Activated CD4-positive, alpha-beta T cell treated with anti-CD3 and anti-CD28 coated beads, Interleukin-2, amount 10 ng/mL, durations not matched to agents 7 days and 5 days (primary cell): ENCODE measurements at regions of chr17 and their contacts with region 1.

Region 1: DNA sequence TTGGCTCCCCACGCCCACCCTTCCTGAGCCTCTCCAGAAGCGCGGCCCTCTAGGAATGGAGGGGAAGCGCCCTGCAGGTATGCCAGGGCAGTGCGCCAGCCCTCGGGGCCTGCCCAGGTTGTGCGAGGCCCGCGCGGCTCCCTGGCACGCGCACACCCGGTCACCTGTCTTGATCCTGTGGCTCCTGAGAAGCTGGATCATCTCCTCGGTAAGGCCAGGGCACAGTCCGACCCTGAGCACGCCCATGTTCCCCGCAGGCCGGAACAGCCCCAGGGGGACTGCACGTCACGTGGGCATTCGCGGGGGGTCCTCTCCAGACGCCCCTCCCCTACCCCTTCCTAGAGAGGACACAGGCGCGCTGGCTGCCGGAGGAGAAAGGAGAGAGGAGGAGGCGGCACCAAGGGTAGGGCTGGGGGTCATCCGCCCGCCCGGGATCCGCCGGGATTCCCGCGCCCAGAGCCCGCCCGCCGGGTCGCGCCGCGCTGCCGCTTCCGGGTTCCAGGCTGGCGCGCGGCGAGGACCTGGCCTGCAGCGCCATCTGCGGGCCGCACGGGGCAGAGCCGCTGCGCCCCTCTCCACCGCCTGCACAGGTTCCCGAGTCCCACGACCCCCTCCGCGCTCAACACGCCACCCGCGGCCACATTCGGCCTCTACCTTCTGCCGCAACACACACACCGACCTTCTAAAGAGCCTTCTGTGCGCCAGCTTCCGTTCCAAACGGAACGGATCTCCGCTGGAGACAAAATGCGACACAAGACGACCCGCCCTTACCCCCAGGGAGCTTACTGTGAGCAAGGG is at the start of gene RAD51D:
- DNase-seq: peak; percentile 81
- H3K4me3 Mint-ChIP-seq: peak within 1 kb of the TSS; percentile 90
- H3K27ac Mint-ChIP-seq: peak within 1 kb of the TSS; percentile 97
- H3K4me1 Mint-ChIP-seq: peaks cover 37% of the 10 kb centered on the region
- H3K27me3 Mint-ChIP-seq: no peaks in the 10 kb centered on the region
- total RNA-seq, gene RAD51D: 26.7 to 41.6 TPM

Region 2: GRCh38 chr17:34980681-34981537 is 138.7 kb before region 1 on chr17:
- CTCF ChIA-PET with region 1: interaction called, 12 read pairs
- POLR2A ChIA-PET with region 1: no interaction called
- DNase-seq: peak; percentile 81
- H3K4me3 Mint-ChIP-seq: peak overlapping the region; percentile 87
- H3K27ac Mint-ChIP-seq: peak overlapping the region; percentile 97
- H3K4me1 Mint-ChIP-seq: peaks cover 39% of the 10 kb centered on the region
- H3K27me3 Mint-ChIP-seq: no peaks in the 10 kb centered on the region

Region 3: GRCh38 chr17:34998205-34998604 is 121.4 kb before region 1 on chr17:
- CTCF ChIA-PET with region 1: interaction called, 20 read pairs
- POLR2A ChIA-PET with region 1: no interaction called
- DNase-seq: peak; percentile 84
- H3K4me3 Mint-ChIP-seq: no peak overlapping the region
- H3K27ac Mint-ChIP-seq: peak overlapping the region; percentile 60
- H3K4me1 Mint-ChIP-seq: peaks cover 10% of the 10 kb centered on the region
- H3K27me3 Mint-ChIP-seq: no peaks in the 10 kb centered on the region

Region 4: DNA sequence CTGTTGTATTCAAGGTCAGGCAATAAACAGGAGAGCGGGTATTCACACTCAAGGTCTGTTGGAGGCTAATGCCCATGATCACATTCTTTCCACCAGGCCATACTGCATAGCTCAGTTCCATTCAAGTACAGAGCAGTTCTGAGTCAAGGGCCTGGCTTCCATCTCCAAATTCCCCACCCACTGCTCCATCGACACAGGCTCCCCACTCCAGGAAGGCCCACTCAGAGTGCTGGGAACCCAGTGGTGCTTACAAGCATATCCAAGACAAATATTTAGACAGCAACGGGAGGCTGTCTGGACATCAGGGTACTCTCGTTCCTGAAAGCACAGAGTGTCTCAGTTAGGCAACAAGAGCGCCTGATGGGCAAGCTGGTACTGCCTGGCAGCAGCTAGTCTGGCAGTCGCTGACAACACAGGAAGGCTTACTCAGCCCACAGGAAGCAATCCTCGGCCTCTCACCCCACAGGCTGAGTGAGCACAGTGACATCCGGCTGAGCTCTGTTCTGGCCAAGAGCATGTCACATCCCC is 97.0 kb before region 1 on chr17:
- CTCF ChIA-PET with region 1: interaction called, 15 read pairs
- POLR2A ChIA-PET with region 1: no interaction called
- DNase-seq: peak; percentile 81
- H3K4me3 Mint-ChIP-seq: peak overlapping the region; percentile 62
- H3K27ac Mint-ChIP-seq: peak overlapping the region; percentile 96
- H3K4me1 Mint-ChIP-seq: peaks cover 51% of the 10 kb centered on the region
- H3K27me3 Mint-ChIP-seq: no peaks in the 10 kb centered on the region

Region 5: DNA sequence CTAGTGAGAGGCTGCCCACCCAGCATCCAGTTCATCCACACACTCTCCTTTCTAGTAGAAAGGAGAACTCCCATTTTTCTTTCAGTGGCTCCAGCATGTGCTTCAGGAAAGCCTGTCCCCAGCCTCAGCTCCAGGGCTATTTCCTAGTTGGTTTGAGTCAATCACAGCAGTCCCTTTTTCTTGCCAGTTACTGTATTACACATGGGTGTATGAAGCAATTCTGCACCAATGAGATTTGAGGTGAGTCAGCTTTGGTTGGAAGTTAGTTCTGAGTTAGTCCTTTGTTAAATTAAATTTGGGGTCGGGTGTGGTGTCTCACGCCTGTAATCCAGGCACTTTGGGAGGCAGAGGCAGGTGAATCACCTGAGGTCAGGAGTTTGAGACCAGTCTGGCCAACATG is 24.7 kb before region 1 on chr17:
- CTCF ChIA-PET with region 1: interaction called, 16 read pairs
- POLR2A ChIA-PET with region 1: interaction called, 3 read pairs
- DNase-seq: no peak
- H3K4me3 Mint-ChIP-seq: no peak overlapping the region
- H3K27ac Mint-ChIP-seq: no peak overlapping the region
- H3K4me1 Mint-ChIP-seq: peaks cover 15% of the 10 kb centered on the region
- H3K27me3 Mint-ChIP-seq: no peaks in the 10 kb centered on the region

Region 6: GRCh38 chr17:35286120-35286781 is 166.7 kb after region 1 on chr17:
- CTCF ChIA-PET with region 1: no interaction called
- POLR2A ChIA-PET with region 1: no interaction called
- DNase-seq: peak; percentile 17
- H3K4me3 Mint-ChIP-seq: no peak overlapping the region
- H3K27ac Mint-ChIP-seq: no peak overlapping the region
- H3K4me1 Mint-ChIP-seq: peaks cover 42% of the 10 kb centered on the region
- H3K27me3 Mint-ChIP-seq: no peaks in the 10 kb centered on the region